Colonic mucosa (tissue), 4 donors: ENCODE measurements at regions of chr6 and their contacts with region 1.

Region 1: DNA sequence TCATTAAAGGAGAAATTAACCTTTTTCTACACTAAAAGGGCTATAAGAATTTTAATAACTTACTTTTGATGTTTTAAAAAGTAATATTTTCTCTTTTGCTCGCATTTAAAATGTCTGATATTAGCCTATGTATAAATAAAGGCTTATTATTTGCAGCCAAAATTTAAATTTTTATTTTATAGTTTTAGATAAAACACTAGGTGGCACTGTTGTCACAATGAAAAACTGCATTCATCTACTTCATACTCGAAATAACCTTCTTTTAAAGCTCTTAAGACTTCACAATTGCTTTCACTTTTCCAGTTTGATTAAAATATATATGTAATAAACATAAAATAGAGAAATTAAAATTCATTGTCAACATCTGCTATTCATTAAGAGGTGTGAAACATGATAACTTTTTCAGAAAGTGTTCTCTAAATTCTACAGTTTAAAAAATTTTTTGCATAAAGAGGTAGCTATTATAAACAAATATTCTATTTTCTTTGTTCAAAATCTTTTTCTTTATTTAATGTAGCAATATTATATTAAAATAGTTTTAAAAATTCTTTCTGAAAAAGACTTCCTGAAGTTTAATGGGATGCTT is 78.8 kb upstream of the DEFB112 start:
- DNase-seq: no peak
- H3K4me3 ChIP-seq: no peak overlapping the region
- H3K27ac ChIP-seq: no peak overlapping the region
- H3K4me1 ChIP-seq: no peaks in the 10 kb centered on the region
- H3K27me3 ChIP-seq: no peaks in the 10 kb centered on the region
- CTCF ChIP-seq: peak; percentile 38

Region 2: GRCh38 chr6:50602292-50602691 is 473.8 kb after region 1 on chr6:
- intact Hi-C with region 1: loop called (anchors 5 kb)
- DNase-seq: no peak
- H3K4me3 ChIP-seq: no peak overlapping the region
- H3K27ac ChIP-seq: no peak overlapping the region
- H3K4me1 ChIP-seq: no peaks in the 10 kb centered on the region
- H3K27me3 ChIP-seq: no peaks in the 10 kb centered on the region
- CTCF ChIP-seq: peak; percentile 74